PC-3 (cell line): ENCODE measurements at regions of chr2 and their contacts with region 1.

Region 1: GRCh38 chr2:215920244-215921100 is 92.9 kb downstream of the MREG start:
- DNase-seq: peak; percentile 84
- ATAC-seq: peak; percentile 82
- H3K4me3 ChIP-seq: no peak overlapping the region
- H3K27ac ChIP-seq: no peak overlapping the region
- H3K4me1 ChIP-seq: peaks cover 35% of the 10 kb centered on the region
- H3K27me3 ChIP-seq: no peaks in the 10 kb centered on the region
- CTCF ChIP-seq: peak; percentile 94

Region 2: GRCh38 chr2:214960677-214961076 is 959.8 kb before region 1 on chr2:
- CTCF ChIA-PET with region 1: no interaction called
- POLR2A ChIA-PET with region 1: no interaction called
- intact Hi-C with region 1: loop called (anchors 5 kb)
- DNase-seq: peak; percentile 42
- ATAC-seq: no peak
- H3K4me3 ChIP-seq: no peak overlapping the region
- H3K27ac ChIP-seq: no peak overlapping the region
- H3K4me1 ChIP-seq: no peaks in the 10 kb centered on the region
- H3K27me3 ChIP-seq: no peaks in the 10 kb centered on the region
- CTCF ChIP-seq: peak; percentile 70

Region 3: GRCh38 chr2:215299337-215299859 is 621.1 kb before region 1 on chr2:
- CTCF ChIA-PET with region 1: no interaction called
- POLR2A ChIA-PET with region 1: no interaction called
- intact Hi-C with region 1: no loop called
- DNase-seq: no peak
- ATAC-seq: no peak
- H3K4me3 ChIP-seq: no peak overlapping the region
- H3K27ac ChIP-seq: no peak overlapping the region
- H3K4me1 ChIP-seq: peaks cover 12% of the 10 kb centered on the region
- H3K27me3 ChIP-seq: no peaks in the 10 kb centered on the region
- CTCF ChIP-seq: no peak

Region 4: DNA sequence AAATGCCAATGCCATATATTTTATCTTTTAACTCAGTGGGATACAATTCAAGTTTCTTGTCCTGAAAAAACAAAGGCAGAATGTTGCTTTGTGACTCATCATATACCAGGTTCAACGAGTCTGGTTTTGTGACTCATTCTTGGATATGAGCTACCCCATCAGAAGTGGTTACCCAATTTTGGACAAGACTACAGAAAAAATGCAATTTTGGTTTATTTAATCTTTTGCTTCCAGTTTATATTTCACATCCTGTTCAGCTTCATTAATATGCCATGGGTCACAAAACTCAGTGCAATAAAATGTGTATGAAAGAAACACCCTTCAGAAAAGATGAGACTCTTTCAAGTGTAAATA is 509.6 kb before region 1 on chr2:
- CTCF ChIA-PET with region 1: no interaction called
- POLR2A ChIA-PET with region 1: no interaction called
- intact Hi-C with region 1: loop called (anchors 1 kb)
- DNase-seq: peak; percentile 97
- ATAC-seq: peak; percentile 81
- H3K4me3 ChIP-seq: peak overlapping the region; percentile 28; the same call in 1 of the 2 replicates
- H3K27ac ChIP-seq: peak overlapping the region; percentile 89
- H3K4me1 ChIP-seq: peaks cover 39% of the 10 kb centered on the region
- H3K27me3 ChIP-seq: no peaks in the 10 kb centered on the region
- CTCF ChIP-seq: no peak

Region 5: DNA sequence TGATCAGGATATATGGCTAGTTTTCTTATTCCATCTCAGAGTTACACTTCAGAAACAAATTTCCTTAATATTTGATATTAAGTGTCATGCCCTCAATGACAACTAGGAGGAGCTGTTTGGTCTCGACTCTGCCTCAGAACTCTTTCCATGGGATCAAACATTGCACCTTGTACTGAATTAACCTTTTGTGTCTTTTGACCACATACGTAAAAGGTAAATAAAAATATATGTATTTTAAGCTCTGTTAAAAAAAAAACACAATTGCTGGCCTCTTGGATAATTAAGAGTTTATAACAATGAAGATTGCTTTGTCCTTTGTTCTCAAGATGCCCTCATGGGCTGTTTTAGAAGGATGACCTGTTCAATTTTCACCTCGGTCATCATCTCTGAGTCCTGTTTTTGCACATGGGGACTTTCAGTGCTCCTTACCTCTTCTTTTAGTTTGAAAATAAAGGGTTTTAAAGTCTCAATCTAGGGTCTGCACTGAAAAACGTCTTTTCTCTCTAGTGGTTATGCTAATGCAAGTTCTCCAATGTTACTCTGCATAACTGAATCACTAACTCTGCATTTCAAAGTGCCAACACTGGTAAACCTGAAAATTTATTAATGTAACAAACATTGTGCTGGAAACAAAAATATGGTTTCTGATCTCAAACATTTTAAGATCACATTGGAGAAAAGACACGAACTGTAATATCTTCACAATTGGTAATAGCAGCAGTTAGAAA is 465.8 kb before region 1 on chr2:
- CTCF ChIA-PET with region 1: no interaction called
- POLR2A ChIA-PET with region 1: no interaction called
- intact Hi-C with region 1: loop called (anchors 1 kb)
- DNase-seq: peak; percentile 70
- ATAC-seq: peak; percentile 37
- H3K4me3 ChIP-seq: no peak overlapping the region
- H3K27ac ChIP-seq: no peak overlapping the region
- H3K4me1 ChIP-seq: 0 out of 2 replicates have a peak, but pooled peaks cover 7% of the 10 kb centered on the region
- H3K27me3 ChIP-seq: no peaks in the 10 kb centered on the region
- CTCF ChIP-seq: peak; percentile 88

Region 6: GRCh38 chr2:215705771-215706361 is 214.6 kb before region 1 on chr2:
- CTCF ChIA-PET with region 1: no interaction called
- POLR2A ChIA-PET with region 1: no interaction called
- intact Hi-C with region 1: loop called (anchors 1 kb)
- DNase-seq: peak; percentile 71
- ATAC-seq: peak; percentile 80
- H3K4me3 ChIP-seq: no peak overlapping the region; the same call in 1 of the 2 replicates
- H3K27ac ChIP-seq: peak overlapping the region; percentile 84
- H3K4me1 ChIP-seq: peaks cover 47% of the 10 kb centered on the region
- H3K27me3 ChIP-seq: no peaks in the 10 kb centered on the region
- CTCF ChIP-seq: no peak